ENCODE measurements at regions of chr9 and their contacts with region 1.

Region 1: DNA sequence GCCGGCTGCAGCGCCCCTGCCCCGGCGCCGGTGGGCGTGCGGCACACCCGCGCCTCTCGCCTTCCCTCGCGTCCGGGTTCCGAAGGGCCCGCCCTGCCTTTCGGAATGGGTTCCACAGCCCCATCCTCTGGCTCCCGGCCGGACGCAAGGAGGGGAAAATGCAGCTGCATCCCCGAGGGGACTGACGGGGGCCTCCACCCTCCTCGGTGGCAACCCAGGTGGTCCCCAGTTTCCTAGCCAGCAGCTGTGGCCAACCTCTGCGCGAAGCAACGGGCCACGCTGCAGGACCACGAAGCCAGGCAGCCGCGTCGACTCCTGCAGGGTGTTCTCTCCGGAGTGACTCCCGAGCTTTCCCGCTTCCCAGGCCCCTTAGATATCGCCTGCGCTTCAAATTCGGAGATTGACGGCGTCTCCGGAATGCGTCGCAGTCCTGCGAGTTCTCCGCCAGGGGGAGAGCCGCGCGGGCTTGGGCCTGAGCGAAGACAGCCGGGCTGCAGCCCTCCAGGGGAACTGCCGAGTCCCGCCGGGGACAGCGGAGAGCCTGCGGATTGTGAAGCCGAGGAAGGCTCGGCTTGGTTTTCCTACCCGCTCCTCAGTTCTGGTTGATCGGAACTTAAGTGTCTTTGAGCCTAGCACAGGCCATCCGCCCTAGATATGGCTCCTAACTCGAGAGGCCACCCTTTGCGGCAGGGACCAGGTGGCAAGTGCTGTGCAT is 582 bp upstream of the APBA1 start:
- DNase-seq: peak; percentile 89
- ATAC-seq: peak; percentile 80
- H3K4me3 ChIP-seq: peak overlapping the region; percentile 69
- H3K27ac ChIP-seq: peak overlapping the region; percentile 73
- H3K4me1 ChIP-seq: peaks cover 6% of the 10 kb centered on the region
- H3K27me3 ChIP-seq: no peaks in the 10 kb centered on the region
- CTCF ChIP-seq: peak; percentile 90
- POLR2A ChIP-seq: no peak
- RAD21 ChIP-seq: peak; percentile 80

Region 2: GRCh38 chr9:69421908-69422801 is 250.6 kb before region 1 on chr9:
- CTCF ChIA-PET with region 1: interaction called, 11 read pairs
- POLR2A ChIA-PET with region 1: no interaction called
- dilution Hi-C with region 1: no loop called
- in situ Hi-C with region 1: no loop called
- intact Hi-C with region 1: loop called (anchors 2 kb)
- DNase-seq: peak; percentile 59
- ATAC-seq: peak; percentile 86
- H3K4me3 ChIP-seq: no peak overlapping the region
- H3K27ac ChIP-seq: no peak overlapping the region
- H3K4me1 ChIP-seq: no peaks in the 10 kb centered on the region
- H3K27me3 ChIP-seq: no peaks in the 10 kb centered on the region; the same call in 1 of the 2 replicates
- CTCF ChIP-seq: peak; percentile 87
- POLR2A ChIP-seq: 0 out of 2 replicates have a peak, but pooled peaks have one; percentile 31
- RAD21 ChIP-seq: peak; percentile 97

Region 3: DNA sequence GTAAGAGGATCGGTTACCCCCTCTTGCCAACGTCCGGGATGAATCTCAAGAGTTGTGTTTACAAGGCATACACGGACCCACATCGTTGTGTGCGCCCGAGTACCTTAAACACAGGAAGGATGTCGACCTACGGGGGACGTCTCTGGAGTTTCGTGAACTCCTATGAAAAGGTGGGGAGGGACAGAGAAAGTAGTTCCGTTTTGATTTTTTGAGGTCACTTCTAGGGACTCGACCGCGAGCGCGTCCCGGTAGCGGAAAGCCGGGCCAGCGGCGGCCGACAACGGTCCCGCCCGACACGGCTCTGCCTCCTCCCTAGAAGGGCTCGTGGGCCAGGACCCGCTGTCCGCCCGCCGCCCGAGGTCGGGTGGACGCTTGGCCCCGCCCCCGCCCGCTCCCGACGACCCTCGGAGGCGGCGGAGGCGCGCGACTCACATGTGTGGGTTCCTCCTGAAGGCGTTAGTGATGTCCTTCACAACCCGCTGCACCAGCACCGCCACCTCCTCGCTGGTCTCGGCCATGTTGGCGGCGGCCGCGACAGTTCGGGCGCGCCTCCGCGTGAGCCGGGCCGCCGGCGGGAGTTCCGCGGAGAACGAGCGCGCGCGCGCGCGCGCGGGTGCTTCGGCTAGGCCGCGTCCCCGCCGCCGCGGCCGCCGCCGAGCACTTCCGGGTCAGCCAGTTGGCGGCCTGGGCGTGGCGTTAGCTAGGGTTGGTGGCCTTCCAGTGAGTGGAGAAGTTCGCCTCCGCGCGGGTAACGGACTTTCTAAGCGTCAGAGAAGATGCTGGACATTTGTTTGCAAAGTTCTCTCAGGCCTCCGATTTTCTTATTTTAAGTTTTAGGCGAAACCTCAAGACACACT is 86.9 kb after region 1 on chr9 and contains the start of gene PTAR1:
- CTCF ChIA-PET with region 1: interaction called, 7 read pairs
- POLR2A ChIA-PET with region 1: interaction called, 3 read pairs
- dilution Hi-C with region 1: no loop called
- in situ Hi-C with region 1: no loop called
- intact Hi-C with region 1: loop called (anchors 1 kb)
- DNase-seq: peak; percentile 86
- ATAC-seq: peak; percentile 93
- H3K4me3 ChIP-seq: peak within 1 kb of the TSS; percentile 98
- H3K27ac ChIP-seq: peak within 1 kb of the TSS; percentile 99
- H3K4me1 ChIP-seq: peaks cover 1% of the 10 kb centered on the region; the same call in 1 of the 2 replicates
- H3K27me3 ChIP-seq: no peaks in the 10 kb centered on the region
- CTCF ChIP-seq: no peak
- POLR2A ChIP-seq: peak; percentile 80
- RAD21 ChIP-seq: no peak
- total RNA-seq, gene PTAR1: 110 and 115 TPM in 2 replicates

Region 4: DNA sequence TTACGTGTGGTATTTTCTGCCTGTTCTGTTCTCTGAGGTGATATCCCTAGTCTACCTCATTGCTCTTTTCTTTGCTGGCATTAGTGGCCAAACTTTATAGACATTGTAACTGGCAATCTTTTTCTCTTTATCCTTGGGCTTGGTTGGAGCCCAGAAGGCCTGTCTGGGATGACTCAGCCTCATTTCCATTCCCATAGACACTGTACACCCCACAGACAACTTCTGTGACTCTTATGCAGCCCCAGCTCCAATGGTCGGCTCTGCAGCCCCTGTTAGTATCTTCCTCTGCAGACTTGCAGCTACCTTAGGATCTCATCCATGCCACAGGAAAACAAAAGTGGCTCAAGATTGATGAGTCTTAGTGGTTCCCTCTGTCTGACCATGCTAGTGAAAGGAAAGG is 227.7 kb after region 1 on chr9:
- CTCF ChIA-PET with region 1: no interaction called
- POLR2A ChIA-PET with region 1: no interaction called
- dilution Hi-C with region 1: no loop called
- in situ Hi-C with region 1: loop called (anchors 10 kb)
- intact Hi-C with region 1: no loop called
- DNase-seq: peak; percentile 56
- ATAC-seq: peak; percentile 53
- H3K4me3 ChIP-seq: no peak overlapping the region
- H3K27ac ChIP-seq: no peak overlapping the region
- H3K4me1 ChIP-seq: peaks cover 15% of the 10 kb centered on the region
- H3K27me3 ChIP-seq: no peaks in the 10 kb centered on the region
- CTCF ChIP-seq: no peak
- POLR2A ChIP-seq: no peak
- RAD21 ChIP-seq: no peak

Region 5: DNA sequence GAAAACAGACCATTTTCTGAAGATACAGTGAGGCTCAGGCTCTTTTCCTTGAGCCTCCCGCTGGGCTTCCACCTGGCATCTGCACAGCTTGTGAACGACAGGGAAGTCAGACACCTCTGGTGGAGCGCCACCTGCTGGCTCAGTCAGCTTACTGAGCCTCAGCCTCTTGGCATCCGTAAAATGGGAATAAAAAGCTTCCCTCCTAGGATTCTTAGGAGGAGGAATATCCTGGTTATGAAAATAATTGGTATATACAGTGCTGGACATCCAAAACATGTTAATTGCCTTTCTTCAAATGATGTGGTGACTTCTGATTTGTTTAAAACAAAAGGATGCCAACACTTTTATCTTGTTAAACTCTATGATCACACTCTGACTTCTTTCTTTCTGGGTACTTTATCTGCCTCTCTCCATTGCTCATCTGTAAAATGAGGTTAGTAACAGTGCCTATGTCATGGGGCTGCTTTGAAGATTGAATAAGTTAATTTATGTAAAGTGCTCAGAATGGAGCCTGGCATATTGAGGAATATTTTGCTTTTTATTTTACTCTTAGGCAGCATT is 438.4 kb after region 1 on chr9:
- CTCF ChIA-PET with region 1: no interaction called
- POLR2A ChIA-PET with region 1: no interaction called
- dilution Hi-C with region 1: no loop called
- in situ Hi-C with region 1: no loop called
- intact Hi-C with region 1: loop called (anchors 1 kb)
- DNase-seq: peak; percentile 81
- ATAC-seq: peak; percentile 67
- H3K4me3 ChIP-seq: no peak overlapping the region
- H3K27ac ChIP-seq: no peak overlapping the region
- H3K4me1 ChIP-seq: peaks cover 7% of the 10 kb centered on the region; the same call in 1 of the 2 replicates
- H3K27me3 ChIP-seq: no peaks in the 10 kb centered on the region
- CTCF ChIP-seq: peak; percentile 83
- POLR2A ChIP-seq: no peak
- RAD21 ChIP-seq: peak; percentile 82